Activated CD4-positive, alpha-beta memory T cell treated with anti-CD3 and anti-CD28 coated beads, Interleukin-2, amount 10 ng/mL, durations not matched to agents 7 days and 5 days (primary cell): ENCODE measurements at regions of chr1 and their contacts with region 1.

Region 1: GRCh38 chr1:92980732-92981647 is 19.7 kb upstream of the DIPK1A start:
- DNase-seq: peak; percentile 62
- H3K4me3 Mint-ChIP-seq: peak overlapping the region; percentile 59
- H3K27ac Mint-ChIP-seq: peak overlapping the region; percentile 97
- H3K4me1 Mint-ChIP-seq: peaks cover 58% of the 10 kb centered on the region
- H3K27me3 Mint-ChIP-seq: no peaks in the 10 kb centered on the region

Region 2: GRCh38 chr1:92922356-92923035 is 58.5 kb before region 1 on chr1:
- CTCF ChIA-PET with region 1: no interaction called
- POLR2A ChIA-PET with region 1: no interaction called
- DNase-seq: no peak
- H3K4me3 Mint-ChIP-seq: no peak overlapping the region
- H3K27ac Mint-ChIP-seq: no peak overlapping the region
- H3K4me1 Mint-ChIP-seq: no peaks in the 10 kb centered on the region
- H3K27me3 Mint-ChIP-seq: no peaks in the 10 kb centered on the region

Region 3: DNA sequence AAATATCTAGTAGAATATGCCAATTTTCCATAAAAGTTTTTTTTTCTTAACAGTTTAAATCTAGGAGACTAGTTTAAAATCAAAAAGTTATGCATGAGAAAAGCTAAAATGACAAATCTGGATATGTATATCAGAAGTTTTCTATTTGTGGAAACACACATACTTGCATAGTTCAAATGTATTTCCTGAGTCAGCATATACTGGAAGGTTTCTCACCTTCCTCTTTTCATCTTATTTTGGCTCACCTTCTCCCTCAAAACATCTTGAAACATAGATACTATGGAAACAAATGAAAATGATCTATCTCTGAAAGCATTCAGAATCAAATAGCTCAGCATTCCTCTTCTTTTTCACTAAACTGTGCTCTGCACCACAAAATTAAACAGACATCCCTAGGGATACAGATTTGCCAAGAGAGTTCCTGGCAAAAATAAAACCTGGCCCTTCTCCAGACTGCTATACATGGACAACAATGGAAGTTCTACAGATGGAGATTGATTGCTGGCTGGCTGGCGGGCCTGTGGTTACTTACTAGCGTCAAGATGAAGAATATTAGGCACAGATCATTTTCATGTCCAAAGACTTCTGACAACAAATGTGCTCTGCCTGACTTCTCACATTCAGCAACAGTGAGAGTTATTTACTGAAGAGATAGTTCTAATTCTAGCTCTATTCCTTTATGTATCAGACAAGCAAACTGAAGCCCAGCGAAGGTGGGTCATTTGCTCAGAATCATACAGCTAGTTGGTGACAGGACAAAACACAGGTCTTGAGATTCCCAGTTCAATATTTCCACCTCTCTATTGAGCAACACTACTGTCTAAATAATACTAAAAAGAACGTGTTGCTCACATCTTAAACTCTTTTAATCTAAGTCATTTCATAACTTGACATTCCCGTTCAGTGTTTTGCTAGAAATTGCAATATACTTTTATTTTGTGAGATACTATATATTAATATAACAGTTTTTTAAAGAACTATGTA is 46.3 kb before region 1 on chr1:
- CTCF ChIA-PET with region 1: no interaction called
- POLR2A ChIA-PET with region 1: no interaction called
- DNase-seq: no peak
- H3K4me3 Mint-ChIP-seq: no peak overlapping the region
- H3K27ac Mint-ChIP-seq: no peak overlapping the region
- H3K4me1 Mint-ChIP-seq: peaks cover 21% of the 10 kb centered on the region
- H3K27me3 Mint-ChIP-seq: no peaks in the 10 kb centered on the region

Region 4: DNA sequence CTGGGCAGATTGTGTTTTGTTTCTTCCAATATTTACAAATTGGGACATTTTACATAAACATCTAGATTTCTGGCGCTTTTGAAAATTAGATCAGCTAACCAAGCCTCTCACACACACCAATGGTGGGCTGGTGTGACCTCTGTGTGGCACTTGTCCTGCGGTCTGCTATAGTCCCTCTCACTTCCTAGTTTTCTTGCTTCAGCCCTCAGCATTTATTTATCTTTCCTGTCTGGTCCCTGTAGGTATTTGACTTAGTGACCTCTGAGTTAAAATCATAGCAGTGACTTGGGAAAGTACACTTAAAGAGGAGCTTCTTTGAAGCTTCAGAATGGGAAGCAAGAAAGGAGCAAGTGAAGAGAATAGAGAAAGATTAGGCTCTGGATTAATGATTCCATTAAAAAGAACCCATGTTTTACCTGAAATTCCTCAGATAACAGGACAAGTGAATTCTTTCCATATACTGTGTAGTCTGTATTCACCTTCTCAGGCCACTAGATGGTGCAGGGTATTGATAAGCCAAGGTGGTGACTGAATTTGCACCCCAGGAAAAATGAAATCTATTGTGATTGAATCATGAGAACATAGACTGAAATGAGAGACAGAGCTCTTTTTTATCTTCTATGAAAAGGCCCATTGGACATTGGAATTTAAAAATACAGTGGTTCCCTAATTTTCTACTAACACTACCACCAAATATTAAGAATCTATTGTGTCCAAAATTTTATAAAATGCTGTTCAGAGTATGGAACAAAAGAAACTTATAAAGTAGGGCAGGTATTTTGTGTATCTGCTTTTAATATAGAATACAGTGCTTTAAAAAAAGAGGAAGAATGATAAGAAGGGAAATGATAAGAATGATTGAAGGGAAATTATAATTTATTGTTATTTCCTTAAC is 12.6 kb before region 1 on chr1:
- CTCF ChIA-PET with region 1: interaction called, 38 read pairs
- POLR2A ChIA-PET with region 1: interaction called, 259 read pairs
- DNase-seq: no peak
- H3K4me3 Mint-ChIP-seq: no peak overlapping the region
- H3K27ac Mint-ChIP-seq: no peak overlapping the region
- H3K4me1 Mint-ChIP-seq: peaks cover 31% of the 10 kb centered on the region
- H3K27me3 Mint-ChIP-seq: no peaks in the 10 kb centered on the region